ENCODE measurements at regions of chr7 and their contacts with region 1.

Region 1: DNA sequence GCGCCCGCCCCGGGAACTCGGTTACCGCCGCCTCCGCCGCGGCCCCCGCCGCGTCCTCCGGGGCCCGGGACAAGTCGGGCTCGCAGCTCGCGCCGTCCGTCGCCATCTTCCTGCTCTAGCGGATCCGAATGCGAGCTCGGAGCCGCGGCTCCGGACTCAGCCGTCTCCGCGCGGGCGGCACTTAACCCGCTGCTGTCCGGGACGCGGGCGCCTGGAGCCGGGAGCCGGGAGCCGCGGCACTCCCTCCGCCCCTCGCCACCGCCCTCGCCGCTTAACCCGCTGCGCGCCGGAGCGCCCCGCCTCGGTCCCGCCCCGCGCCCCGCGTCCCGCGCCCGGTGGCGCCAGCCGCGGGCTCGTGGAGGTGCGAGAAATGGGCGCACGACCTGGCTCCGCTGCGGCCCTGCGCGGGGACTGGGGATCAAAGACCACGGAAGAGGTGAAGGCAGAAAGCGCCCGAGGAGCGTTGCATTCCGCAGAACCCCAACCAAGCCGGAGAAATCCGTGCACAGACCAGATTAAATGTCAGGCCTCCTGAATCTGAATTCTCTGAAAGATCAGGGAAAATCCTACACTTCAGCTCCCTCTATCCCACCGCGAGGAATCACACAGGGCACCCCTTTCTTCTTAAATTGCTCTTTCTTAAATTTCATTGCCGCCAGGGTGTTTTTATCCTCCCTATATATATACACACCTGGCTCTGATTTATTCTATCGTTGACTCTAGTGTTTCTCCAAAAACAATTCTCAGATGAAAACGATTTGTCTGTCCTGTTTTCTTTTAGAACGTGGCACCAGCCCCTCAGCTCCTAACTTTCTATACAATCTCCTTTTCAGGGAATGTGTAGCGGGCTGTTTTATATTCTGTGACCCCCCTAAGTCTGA is at the start of gene CTTNBP2:
- DNase-seq: peak; percentile 83
- H3K4me3 ChIP-seq: peak within 1 kb of the TSS; percentile 44 to 80 (median 64)
- H3K27ac ChIP-seq: peak within 1 kb of the TSS; percentile 27 to 83 (median 72)
- H3K4me1 ChIP-seq: peaks cover 0 to 28% (median 13%) of the 10 kb centered on the region in 6 donors
- H3K27me3 ChIP-seq: peaks cover 0 to 73% (median 18%) of the 10 kb centered on the region in 7 donors
- CTCF ChIP-seq: no peak
- POLR2A ChIP-seq: no peak
- total RNA-seq, gene CTTNBP2: 5.3 to 15.1 (median 9.0) TPM

Region 2: DNA sequence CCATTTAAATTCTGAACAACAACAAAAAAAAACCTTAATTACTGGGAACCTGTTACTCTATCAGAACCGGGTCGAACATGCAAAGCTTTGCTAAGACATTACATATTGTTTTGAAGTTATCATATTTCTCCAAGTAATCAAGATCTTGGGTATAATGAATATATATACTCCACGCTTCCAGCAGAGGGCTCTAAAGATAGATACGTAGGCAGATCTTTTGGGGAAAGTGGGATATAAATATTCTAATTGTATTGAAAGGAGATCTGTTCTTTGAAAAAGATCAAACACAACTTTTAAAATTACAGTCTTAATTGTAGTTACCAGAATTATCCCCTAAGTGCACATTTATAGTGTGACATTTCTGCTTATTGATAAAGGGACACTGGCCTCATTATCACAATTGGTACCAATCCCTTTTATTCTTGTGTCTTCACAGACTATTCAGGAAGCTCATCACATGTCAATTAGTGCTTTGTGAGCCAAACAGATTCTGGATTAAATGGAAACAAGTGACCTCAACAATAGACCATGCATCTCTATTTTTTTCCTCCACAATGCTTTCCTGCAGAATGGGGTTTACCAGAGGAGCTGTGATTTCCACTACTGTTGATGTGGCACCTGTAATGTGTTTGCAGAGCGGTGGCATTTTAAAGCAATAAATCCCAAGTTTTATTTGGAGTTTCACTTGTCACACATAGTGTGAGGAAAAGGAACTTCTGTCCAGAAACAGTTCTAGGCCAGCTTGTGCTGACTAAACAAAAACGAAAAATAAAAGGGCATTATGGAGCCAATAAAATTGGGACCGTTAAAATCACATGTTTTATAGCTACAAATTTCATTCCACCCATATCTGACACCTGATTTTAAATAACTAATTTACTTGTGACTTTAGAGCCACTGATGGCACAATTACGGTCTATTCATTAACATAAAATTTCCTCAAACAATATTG is 122.7 kb before region 1 on chr7:
- intact Hi-C with region 1: loop called (anchors 2 kb)
- DNase-seq: no peak
- H3K4me3 ChIP-seq: no peak overlapping the region
- H3K27ac ChIP-seq: no peak overlapping the region
- H3K4me1 ChIP-seq: peaks cover 0 to 3% (median 0%) of the 10 kb centered on the region in 6 donors
- H3K27me3 ChIP-seq: no peaks in the 10 kb centered on the region
- CTCF ChIP-seq: peak in 6 of 11 experiments; percentile 16 to 56 (median 40)
- POLR2A ChIP-seq: no peak

Region 3: DNA sequence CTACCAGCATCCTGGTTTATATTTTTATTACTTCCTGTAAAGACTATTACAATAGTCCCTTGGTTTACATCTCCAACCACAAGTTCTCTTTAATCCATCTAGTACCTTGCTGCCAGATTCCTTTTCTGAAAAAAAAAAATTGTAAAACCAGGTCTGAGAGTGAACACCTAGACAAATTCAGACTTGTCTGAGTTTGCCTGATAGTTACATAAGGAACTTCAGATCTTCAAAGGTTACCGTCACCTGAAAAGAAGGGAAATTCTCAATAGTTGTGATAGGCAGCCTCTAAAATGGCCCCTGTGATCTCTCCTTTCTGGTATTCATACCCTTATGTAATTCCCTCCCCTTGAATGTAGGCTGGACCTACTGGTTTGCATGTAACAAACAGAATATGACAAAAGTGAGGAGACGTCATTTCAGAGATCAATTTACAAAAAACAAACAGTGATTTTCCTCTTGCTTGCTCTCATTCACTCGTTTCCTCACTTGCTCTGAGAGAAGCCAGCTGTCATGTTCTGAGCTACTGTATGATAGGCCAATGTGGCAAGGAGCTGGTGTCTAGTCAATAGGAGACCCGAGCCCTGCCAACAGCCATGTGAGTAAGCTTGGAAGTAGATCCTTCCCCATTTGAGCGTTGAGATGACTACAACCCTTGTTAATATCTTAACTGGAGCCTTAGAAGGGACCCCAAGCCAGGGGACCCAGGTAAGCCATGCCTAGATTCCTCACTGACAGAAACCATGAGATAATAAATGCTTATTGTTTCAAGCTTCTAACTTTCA is 199.5 kb after region 1 on chr7:
- intact Hi-C with region 1: no loop called
- DNase-seq: no peak
- H3K4me3 ChIP-seq: no peak overlapping the region
- H3K27ac ChIP-seq: peak overlapping the region in 1 of 8 donors; percentile 25
- H3K4me1 ChIP-seq: no peaks in the 10 kb centered on the region
- H3K27me3 ChIP-seq: no peaks in the 10 kb centered on the region
- CTCF ChIP-seq: no peak
- POLR2A ChIP-seq: no peak

Region 4: DNA sequence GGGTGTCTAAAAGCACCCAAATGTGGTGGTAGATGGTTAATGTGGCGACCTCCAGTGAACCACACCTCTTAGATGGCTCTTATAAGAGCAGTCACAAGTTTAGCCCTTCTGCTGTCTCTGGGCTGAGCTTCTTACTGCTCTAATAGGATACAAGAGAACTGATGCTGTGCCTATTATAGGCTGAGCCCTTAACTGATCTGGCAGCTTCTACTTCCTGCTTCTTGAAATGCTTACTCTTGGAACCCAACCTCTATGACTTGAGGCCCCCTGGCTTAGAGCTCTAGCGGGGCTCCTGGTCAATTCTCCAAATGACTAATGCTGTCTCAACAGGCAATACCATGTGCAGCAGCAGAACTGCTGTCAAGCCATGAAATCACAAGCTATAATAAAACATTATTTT is 275.4 kb after region 1 on chr7:
- intact Hi-C with region 1: no loop called
- DNase-seq: no peak
- H3K4me3 ChIP-seq: no peak overlapping the region
- H3K27ac ChIP-seq: no peak overlapping the region
- H3K4me1 ChIP-seq: no peaks in the 10 kb centered on the region
- H3K27me3 ChIP-seq: no peaks in the 10 kb centered on the region
- CTCF ChIP-seq: no peak
- POLR2A ChIP-seq: no peak

Measured in spleen (tissue), 13 donors.